ENCODE measurements at regions of chr16 and their contacts with region 1.

Region 1: GRCh38 chr16:81035398-81035974 is at the start of gene ATMIN:
- DNase-seq: peak; percentile 9
- H3K4me3 ChIP-seq: peak within 1 kb of the TSS; percentile 71
- H3K27me3 ChIP-seq: no peaks in the 10 kb centered on the region
- CTCF ChIP-seq: peak; percentile 80
- polyA plus RNA-seq, gene ATMIN: 22.3 and 34.7 TPM in 2 replicates

Region 2: DNA sequence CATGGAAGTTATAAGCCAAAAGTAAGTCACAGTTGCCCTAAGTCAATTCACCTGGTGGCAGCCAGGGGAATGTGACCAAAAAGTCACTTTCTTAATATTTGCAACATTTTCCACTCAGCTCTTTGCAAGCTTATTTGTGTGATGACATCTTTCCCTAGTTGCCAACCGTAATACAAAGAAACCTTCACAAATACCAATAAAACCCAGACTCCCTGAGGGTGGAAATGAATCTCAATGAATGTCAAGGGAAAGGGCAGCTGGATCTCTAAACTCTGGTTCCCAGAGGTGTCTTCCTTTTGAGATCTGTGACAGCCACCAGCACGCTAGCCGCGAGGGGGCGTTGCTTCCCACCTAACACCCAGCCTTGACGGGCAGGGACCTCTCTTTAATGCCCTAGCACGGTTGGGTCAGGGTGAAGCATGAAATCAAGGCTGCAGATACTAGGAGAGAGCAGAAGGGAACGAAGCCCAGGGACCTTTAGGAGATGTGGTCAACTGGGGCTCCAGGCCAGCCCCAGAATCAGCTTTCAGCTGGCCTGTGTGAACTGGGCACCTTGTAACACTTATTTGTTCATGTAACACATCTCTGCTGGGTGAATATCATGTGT is 111.0 kb before region 1 on chr16:
- CTCF ChIA-PET with region 1: interaction called, 11 read pairs
- POLR2A ChIA-PET with region 1: no interaction called
- DNase-seq: no peak
- H3K4me3 ChIP-seq: no peak overlapping the region
- H3K27me3 ChIP-seq: no peaks in the 10 kb centered on the region
- CTCF ChIP-seq: peak; percentile 84

Region 3: DNA sequence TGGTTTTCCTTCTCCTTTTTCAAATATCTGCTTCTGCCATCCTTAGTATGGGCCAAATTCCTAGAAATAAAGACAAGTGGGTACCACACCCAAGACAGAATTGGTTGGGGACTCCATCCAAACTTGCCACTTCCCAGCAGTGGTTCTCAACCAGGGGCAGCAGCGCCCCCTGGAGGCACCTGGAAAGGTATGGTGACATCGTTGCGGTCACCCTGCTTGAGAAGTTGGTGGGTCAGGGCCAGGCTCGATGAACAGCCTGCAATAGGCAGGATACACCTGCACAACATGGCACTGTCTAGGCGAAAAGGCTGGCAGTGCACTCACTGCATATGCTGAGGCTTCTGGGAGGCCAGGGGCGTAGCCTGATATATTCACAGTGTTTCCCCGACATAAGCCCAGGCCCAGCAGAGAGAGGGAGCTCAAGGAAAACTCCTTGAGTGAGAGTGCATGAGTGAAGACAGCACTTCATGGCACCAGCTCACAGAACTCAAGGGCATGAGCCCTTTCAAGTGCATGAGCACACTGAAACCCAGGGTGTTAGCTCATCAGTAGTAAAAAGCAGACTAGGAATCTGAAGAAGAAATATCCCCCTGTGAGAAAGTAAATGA is 86.5 kb before region 1 on chr16:
- CTCF ChIA-PET with region 1: no interaction called
- POLR2A ChIA-PET with region 1: no interaction called
- DNase-seq: no peak
- H3K4me3 ChIP-seq: no peak overlapping the region
- H3K27me3 ChIP-seq: no peaks in the 10 kb centered on the region
- CTCF ChIP-seq: peak; percentile 73

Region 4: DNA sequence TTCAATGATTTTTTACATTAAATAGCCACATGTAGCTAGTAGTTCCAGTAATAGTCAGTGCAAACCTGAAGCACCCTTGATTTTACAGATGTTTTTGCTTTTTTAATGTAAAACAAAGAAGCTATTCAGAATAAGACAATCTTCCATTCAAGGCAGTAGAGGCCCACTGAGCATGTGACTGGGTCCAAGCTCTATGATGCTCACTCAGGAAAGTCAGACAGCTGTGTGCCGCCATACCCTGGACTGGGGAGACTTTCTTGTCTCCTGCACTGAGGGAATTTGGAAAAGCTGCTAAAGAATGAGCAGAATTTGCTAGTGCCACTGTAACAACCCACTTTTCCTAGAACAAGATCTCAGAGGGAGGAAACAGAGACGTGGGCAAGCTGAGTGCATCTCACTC is 17.0 kb before region 1 on chr16:
- CTCF ChIA-PET with region 1: interaction called, 27 read pairs
- POLR2A ChIA-PET with region 1: no interaction called
- DNase-seq: no peak
- H3K4me3 ChIP-seq: no peak overlapping the region
- H3K27me3 ChIP-seq: no peaks in the 10 kb centered on the region
- CTCF ChIP-seq: no peak

Region 5: GRCh38 chr16:81189100-81189664 is 153.7 kb after region 1 on chr16:
- CTCF ChIA-PET with region 1: interaction called, 11 read pairs
- POLR2A ChIA-PET with region 1: no interaction called
- DNase-seq: no peak
- H3K4me3 ChIP-seq: no peak overlapping the region
- H3K27me3 ChIP-seq: peaks cover 1% of the 10 kb centered on the region; the same call in 1 of the 2 replicates
- CTCF ChIP-seq: no peak

Region 6: DNA sequence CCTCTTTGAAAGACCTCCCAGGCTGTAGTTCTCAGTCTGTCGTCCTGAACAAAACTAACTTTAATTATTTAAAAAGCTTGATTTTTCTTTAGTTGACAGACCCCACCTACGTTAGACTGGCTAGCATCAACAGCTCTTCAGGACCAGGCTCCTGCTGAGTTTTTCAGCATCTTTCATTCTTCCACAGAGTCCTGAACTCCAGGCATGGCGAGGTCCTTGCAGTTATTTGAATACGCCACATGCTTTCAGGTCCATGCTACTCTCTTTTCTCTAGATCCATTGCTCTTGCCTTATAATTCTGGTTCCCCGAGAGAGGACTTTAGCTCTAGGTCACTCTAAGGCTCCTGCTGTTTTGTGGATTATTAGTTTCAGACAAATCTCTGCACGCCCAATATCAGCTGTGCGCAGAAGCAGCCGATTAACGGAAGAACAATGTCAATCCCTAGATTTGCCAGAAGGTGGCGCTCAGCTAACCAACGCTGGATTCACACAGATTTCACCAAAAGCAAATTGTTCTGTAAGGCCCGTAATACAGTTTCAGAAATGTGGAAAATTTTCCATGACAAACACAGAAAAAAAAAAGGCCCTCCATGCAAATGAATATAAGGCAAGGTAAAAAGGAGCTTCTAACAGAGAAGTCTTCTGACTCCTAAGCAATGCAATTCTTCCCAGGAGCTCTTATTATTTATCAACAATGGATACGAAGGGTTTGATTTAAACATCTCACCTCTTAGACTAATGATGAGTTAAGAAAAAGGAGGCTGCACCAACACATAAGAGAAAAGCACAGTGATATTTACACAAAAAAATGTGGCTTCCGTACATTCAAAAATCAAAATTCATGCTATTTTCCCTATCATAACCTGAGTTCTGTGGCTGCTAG is 169.6 kb after region 1 on chr16:
- CTCF ChIA-PET with region 1: interaction called, 22 read pairs
- POLR2A ChIA-PET with region 1: no interaction called
- DNase-seq: no peak
- H3K4me3 ChIP-seq: no peak overlapping the region
- H3K27me3 ChIP-seq: peaks cover 4% of the 10 kb centered on the region
- CTCF ChIP-seq: peak; percentile 74

Measured in BJ (cell line).